Vagina (tissue), 2 donors: ENCODE measurements at regions of chr5 and their contacts with region 1.

Region 1: GRCh38 chr5:124583469-124584350 is 162.7 kb downstream of the ZNF608 start:
- DNase-seq: no peak
- H3K4me3 ChIP-seq: no peak overlapping the region
- H3K27ac ChIP-seq: no peak overlapping the region
- H3K4me1 ChIP-seq: no peaks in the 10 kb centered on the region
- H3K27me3 ChIP-seq: no peaks in the 10 kb centered on the region
- CTCF ChIP-seq: no peak
- POLR2A ChIP-seq: no peak

Region 2: DNA sequence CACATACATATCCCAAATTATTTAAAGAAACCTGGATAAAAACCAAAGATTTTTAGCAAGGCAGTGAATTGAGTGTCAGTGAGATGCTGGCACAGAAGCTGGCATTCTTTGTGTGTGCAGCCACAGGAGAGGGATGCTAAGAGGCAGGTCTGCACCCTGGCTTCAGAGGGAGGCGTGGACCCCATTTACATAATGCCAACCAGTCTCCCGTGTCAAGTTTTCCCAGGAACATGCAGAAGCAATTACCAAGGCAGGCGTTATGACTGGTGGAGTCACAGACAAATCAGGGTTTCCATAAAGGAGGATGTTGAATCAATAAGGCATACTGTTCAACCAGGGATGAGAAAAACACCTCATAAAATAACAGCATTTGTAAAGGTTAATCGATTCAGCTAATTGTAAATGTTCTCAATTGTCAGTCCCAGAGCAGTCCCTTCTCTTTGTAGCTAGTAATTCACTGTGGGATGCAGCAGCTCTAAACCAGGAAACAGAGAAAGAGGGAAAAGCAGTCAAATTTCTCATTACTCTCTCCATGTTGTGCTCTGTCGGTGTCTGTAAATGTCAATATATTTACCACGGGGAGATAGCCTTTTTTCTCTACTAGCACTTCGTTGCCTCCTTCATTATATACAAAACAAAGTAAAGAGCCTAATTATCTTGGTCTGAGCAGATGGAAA is 1387.1 kb after region 1 on chr5:
- intact Hi-C with region 1: loop called (anchors 10 kb)
- DNase-seq: no peak
- H3K4me3 ChIP-seq: no peak overlapping the region
- H3K27ac ChIP-seq: no peak overlapping the region
- H3K4me1 ChIP-seq: no peaks in the 10 kb centered on the region
- H3K27me3 ChIP-seq: no peaks in the 10 kb centered on the region
- CTCF ChIP-seq: no peak
- POLR2A ChIP-seq: no peak